Colonic mucosa (tissue), 4 donors: ENCODE measurements at regions of chr3 and their contacts with region 1.

Region 1: DNA sequence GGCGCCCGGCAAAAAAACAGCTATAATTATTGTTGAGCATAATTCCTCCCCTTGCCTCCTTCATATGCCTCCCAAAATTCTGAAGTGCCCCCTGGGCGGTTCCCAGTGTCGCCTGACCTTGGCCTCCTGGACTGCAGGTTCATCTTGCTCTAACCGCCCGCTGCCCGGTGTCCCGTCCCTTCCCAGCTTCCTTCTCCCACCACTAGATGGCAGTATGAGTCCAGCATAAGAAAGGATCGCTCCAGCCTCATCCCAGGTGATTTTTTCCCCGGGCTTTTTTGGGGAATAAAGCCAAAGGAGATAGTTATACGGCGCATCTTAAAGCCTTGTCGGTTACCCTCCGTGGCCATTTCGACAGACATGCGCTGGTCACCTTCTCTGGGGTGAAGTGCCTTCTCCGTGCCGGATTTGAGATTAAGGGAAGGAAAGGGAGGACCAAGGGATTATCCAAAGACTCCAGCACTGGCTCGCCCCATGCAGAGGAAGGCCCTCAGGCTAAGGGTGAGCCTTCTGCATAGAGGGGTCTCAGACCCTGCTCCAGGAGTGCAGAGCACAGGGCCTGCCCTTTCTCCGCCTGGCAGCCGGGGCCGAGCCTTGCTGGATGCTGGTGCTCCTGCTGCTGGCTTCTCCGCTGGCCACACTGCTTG is 45.8 kb upstream of the TRA2B start:
- DNase-seq: peak; percentile 81
- H3K4me3 ChIP-seq: no peak overlapping the region
- H3K27ac ChIP-seq: no peak overlapping the region
- H3K4me1 ChIP-seq: no peaks in the 10 kb centered on the region
- H3K27me3 ChIP-seq: no peaks in the 10 kb centered on the region
- CTCF ChIP-seq: peak; percentile 88

Region 2: GRCh38 chr3:186097663-186098451 is 114.2 kb after region 1 on chr3:
- intact Hi-C with region 1: no loop called
- DNase-seq: peak; percentile 86
- H3K4me3 ChIP-seq: peak overlapping the region; percentile 1
- H3K27ac ChIP-seq: no peak overlapping the region
- H3K4me1 ChIP-seq: peaks cover 13% of the 10 kb centered on the region
- H3K27me3 ChIP-seq: no peaks in the 10 kb centered on the region
- CTCF ChIP-seq: no peak

Region 3: DNA sequence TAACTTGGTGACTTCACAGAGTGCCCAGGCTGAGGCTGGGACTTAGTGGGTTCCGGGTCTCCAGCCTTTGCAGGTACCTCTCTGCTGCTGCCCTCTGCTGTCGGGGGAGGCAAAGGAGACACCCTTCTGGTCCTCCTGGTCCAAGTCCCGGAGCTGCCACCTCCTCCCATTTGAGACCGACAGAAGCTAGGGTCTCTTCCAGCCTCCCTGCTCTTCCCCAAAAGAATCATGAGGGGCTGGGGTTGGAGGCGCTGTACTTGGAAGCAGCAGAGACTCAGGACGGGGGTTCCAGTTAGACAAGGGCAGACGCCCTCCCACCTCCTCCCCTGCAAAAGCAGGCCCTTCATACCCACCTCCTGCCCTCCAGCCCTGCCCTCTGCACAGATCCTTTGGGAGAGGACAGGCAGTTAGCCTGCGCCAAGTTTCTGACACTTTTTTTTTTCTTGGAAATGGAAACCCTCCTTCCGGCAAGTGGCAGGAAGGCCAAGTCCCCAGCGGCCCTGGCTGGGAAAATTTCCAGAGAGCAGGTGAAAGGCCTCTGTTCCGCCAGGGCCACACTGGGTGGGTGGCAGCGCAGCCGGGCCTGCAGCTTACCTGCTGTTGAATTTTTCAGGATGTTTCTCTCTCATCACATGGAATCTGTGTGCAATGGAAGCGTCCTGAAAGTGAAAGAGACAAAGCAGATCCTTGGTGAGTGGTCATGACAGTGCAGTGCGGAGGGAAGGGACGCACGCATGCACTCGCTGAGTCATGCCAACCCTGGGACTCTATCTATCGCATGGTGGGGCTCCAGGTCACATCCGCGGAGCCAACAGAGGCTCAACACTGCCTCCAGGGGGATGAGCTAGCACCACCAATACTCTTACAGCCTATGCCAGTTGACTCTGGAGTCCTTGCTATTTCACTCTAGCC is 258.5 kb after region 1 on chr3:
- intact Hi-C with region 1: loop called (anchors 2 kb)
- DNase-seq: peak; percentile 64
- H3K4me3 ChIP-seq: peak overlapping the region; percentile 6
- H3K27ac ChIP-seq: no peak overlapping the region
- H3K4me1 ChIP-seq: no peaks in the 10 kb centered on the region
- H3K27me3 ChIP-seq: no peaks in the 10 kb centered on the region
- CTCF ChIP-seq: peak; percentile 43